CD4-positive, alpha-beta T cell (primary cell): ENCODE measurements at regions of chr17 and their contacts with region 1.

Region 1: DNA sequence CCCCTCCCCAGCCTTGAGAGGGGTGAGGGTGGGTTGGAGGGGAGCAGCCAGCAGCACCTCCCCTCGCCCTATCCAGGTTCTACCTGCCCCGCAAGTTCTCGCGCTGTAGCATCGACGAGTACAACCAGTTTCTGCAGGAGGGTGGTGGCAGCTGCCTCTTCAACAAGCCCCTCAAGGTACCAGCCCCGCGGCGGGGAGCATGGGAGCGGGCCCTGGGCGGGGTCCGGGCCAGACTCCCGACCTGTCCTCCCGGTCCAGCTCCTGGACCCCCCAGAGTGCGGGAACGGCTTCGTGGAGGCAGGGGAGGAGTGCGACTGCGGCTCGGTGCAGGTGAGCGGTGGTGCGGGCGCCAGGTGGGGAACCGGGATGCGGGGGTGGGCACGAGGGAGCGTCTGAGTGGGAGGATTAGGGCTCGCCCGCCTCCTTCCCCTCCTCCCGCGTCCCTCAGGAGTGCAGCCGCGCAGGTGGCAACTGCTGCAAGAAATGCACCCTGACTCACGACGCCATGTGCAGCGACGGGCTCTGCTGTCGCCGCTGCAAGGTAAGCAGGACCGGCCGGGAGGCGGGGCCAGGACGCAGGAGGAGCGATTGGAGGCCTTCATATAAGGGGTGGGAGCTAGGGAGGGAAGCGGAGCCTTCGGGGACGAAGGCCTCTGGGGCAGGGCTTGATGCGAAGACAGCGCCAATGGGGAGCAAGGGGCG is 16.5 kb downstream of the ADAM11 start:
- DNase-seq: peak in 13 of 14 experiments; percentile 95 to 100 (median 98)
- ATAC-seq: peak; percentile 93
- H3K4me3 ChIP-seq: peak overlapping the region; percentile 74
- H3K4me3 Mint-ChIP-seq: peak overlapping the region; percentile 91
- H3K27ac ChIP-seq: no peak overlapping the region
- H3K27ac Mint-ChIP-seq: peak overlapping the region; percentile 78
- H3K4me1 ChIP-seq: peaks cover 35% of the 10 kb centered on the region
- H3K4me1 Mint-ChIP-seq: peaks cover 17% of the 10 kb centered on the region
- H3K27me3 ChIP-seq: peaks cover 0 to 9% of the 10 kb centered on the region in 2 experiments
- H3K27me3 Mint-ChIP-seq: peaks cover 14% of the 10 kb centered on the region
- CTCF ChIP-seq: peak; percentile 60

Region 2: GRCh38 chr17:44864866-44865660 is 89.8 kb after region 1 on chr17:
- CTCF ChIA-PET with region 1: interaction called, 13 read pairs
- POLR2A ChIA-PET with region 1: interaction called, 4 read pairs
- intact Hi-C with region 1: loop called (anchors 1 kb)
- DNase-seq: peak; percentile 44 to 88 (median 62)
- ATAC-seq: peak; percentile 80
- H3K4me3 ChIP-seq: no peak overlapping the region
- H3K4me3 Mint-ChIP-seq: no peak overlapping the region
- H3K27ac ChIP-seq: no peak overlapping the region
- H3K27ac Mint-ChIP-seq: no peak overlapping the region
- H3K4me1 ChIP-seq: no peaks in the 10 kb centered on the region
- H3K4me1 Mint-ChIP-seq: no peaks in the 10 kb centered on the region
- H3K27me3 ChIP-seq: no peaks in the 10 kb centered on the region
- H3K27me3 Mint-ChIP-seq: no peaks in the 10 kb centered on the region
- CTCF ChIP-seq: peak; percentile 85

Region 3: GRCh38 chr17:44947461-44948314 is 172.4 kb after region 1 on chr17 and contains the start of gene KIF18B:
- CTCF ChIA-PET with region 1: no interaction called
- POLR2A ChIA-PET with region 1: no interaction called
- intact Hi-C with region 1: loop called in 1 of 2 experiments (anchors 1 kb)
- DNase-seq: peak; percentile 77 to 94 (median 84)
- ATAC-seq: peak; percentile 98
- H3K4me3 ChIP-seq: peak within 1 kb of the TSS; percentile 60
- H3K4me3 Mint-ChIP-seq: peak within 1 kb of the TSS; percentile 93
- H3K27ac ChIP-seq: peak within 1 kb of the TSS in 1 of 2 donors; percentile 25
- H3K27ac Mint-ChIP-seq: peak within 1 kb of the TSS; percentile 85
- H3K4me1 ChIP-seq: peaks cover 20% of the 10 kb centered on the region
- H3K4me1 Mint-ChIP-seq: peaks cover 7% of the 10 kb centered on the region
- H3K27me3 ChIP-seq: peaks cover 0 to 5% of the 10 kb centered on the region in 2 experiments
- H3K27me3 Mint-ChIP-seq: no peaks in the 10 kb centered on the region
- CTCF ChIP-seq: no peak
- total RNA-seq, gene KIF18B: 0.05 to 0.08 TPM

Region 4: DNA sequence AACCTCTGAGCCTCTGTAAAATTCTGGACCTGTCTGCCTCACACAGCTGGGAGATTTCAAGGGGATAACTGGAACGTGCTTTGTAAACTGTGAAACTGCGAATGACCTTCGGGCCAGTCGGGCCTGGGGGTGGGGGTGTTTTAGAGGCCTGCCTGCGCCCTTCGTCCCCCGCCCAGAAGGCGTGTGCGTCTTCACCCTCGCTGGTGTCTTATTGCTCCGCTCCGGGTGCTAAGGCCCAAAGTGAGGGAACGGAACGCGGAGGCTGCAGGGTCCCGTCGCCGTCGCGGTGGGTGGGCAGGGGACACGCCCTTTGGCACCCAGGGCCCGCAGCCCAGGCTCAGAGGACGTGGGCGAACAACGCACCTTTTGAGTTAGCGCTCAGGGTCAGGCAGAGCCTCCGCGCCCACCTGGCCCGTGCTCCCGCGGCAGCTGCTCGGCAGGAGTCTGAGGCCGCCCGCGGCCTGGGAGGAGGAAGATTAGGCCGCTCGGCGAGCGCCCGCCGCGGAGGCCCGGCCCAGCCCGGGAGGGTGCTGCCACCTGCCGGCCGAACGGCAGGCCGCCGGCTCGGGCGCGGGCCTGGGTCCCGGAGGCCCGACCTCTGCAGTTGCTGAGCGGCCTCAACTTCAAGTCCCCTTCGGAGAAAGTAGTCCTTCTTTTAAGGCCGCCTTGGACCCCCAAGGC is 246.5 kb after region 1 on chr17:
- CTCF ChIA-PET with region 1: interaction called, 5 read pairs
- POLR2A ChIA-PET with region 1: interaction called, 4 read pairs
- intact Hi-C with region 1: loop called (anchors 1 kb)
- DNase-seq: peak; percentile 29 to 85 (median 58)
- ATAC-seq: peak; percentile 85
- H3K4me3 ChIP-seq: peak overlapping the region; percentile 44
- H3K4me3 Mint-ChIP-seq: peak overlapping the region; percentile 39
- H3K27ac ChIP-seq: no peak overlapping the region
- H3K27ac Mint-ChIP-seq: no peak overlapping the region
- H3K4me1 ChIP-seq: peaks cover 36% of the 10 kb centered on the region
- H3K4me1 Mint-ChIP-seq: peaks cover 24% of the 10 kb centered on the region
- H3K27me3 ChIP-seq: peaks cover 34 to 40% of the 10 kb centered on the region in 2 experiments
- H3K27me3 Mint-ChIP-seq: peaks cover 39% of the 10 kb centered on the region
- CTCF ChIP-seq: peak; percentile 66

Region 5: DNA sequence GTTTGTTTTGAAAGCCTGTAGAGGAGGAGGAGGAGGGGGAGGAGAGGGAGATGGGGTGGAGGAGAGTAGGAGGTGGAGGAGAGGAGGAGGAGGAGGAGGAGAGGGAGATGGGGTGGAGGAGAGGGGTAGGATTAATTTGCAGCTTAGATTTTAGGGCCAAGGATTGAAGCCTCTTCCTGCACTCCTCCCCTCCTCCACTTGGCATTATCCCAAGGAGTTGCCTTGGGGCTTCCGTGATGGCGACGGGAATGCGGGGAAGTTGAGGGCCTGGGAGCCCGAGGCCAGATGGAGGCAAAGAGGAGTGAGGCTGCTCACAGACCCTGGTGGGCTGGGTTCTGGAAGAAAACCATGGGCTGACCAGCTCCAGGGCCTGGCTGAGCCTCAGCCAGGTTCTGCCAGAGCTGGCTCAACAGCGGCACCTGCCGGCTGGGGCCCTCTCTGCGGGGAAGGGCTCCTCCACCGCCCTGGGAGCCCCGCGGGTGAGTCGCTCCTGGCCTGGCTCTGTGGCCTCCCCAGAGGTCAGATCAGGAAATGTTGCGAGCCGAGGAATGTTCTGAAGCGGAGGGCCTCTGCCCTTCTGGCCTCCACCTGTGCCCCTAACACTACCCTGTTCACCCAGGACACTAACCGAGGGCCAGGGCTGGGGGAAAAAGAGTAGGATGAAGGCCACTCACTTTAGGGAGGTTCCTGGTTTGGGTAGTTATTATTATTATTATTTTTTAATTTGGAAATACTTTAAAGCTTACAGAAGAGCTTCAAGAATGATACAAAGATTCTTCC is 422.5 kb after region 1 on chr17:
- CTCF ChIA-PET with region 1: no interaction called
- POLR2A ChIA-PET with region 1: no interaction called
- intact Hi-C with region 1: loop called in 1 of 2 experiments (anchors 5 kb)
- DNase-seq: peak; percentile 72 to 91 (median 84)
- ATAC-seq: peak; percentile 100
- H3K4me3 ChIP-seq: no peak overlapping the region
- H3K4me3 Mint-ChIP-seq: no peak overlapping the region
- H3K27ac ChIP-seq: no peak overlapping the region
- H3K27ac Mint-ChIP-seq: no peak overlapping the region
- H3K4me1 ChIP-seq: peaks cover 8% of the 10 kb centered on the region
- H3K4me1 Mint-ChIP-seq: peaks cover 3% of the 10 kb centered on the region
- H3K27me3 ChIP-seq: no peaks in the 10 kb centered on the region
- H3K27me3 Mint-ChIP-seq: no peaks in the 10 kb centered on the region
- CTCF ChIP-seq: peak; percentile 92